ENCODE measurements at regions of chr4 and their contacts with region 1.

Region 1: GRCh38 chr4:39181905-39182638 is at the start of gene WDR19:
- DNase-seq: peak; percentile 99
- ATAC-seq: peak; percentile 99
- H3K4me3 ChIP-seq: peak within 1 kb of the TSS; percentile 91 to 96 (median 93)
- H3K27ac ChIP-seq: peak within 1 kb of the TSS; percentile 47
- H3K4me1 ChIP-seq: peaks cover 20% of the 10 kb centered on the region
- H3K27me3 ChIP-seq: no peaks in the 10 kb centered on the region
- CTCF ChIP-seq: peak; percentile 69
- EP300 ChIP-seq: no peak
- POLR2A ChIP-seq: peak in 1 of 2 experiments; percentile 33; a peak in 2 of 4 replicates
- RAD21 ChIP-seq: 0 out of 2 replicates have a peak, but pooled peaks have one; percentile 11
- total RNA-seq, gene WDR19: 20.3 and 22.9 TPM in 2 replicates

Region 2: GRCh38 chr4:39365830-39366771 is 184.0 kb after region 1 on chr4 and contains the start of gene RFC1:
- CTCF ChIA-PET with region 1: no interaction called
- POLR2A ChIA-PET with region 1: no interaction called
- in situ Hi-C with region 1: no loop called
- intact Hi-C with region 1: loop called (anchors 10 kb)
- DNase-seq: peak; percentile 87
- ATAC-seq: peak; percentile 81
- H3K4me3 ChIP-seq: peak within 1 kb of the TSS; percentile 76 to 85 (median 84)
- H3K27ac ChIP-seq: peak within 1 kb of the TSS; percentile 88
- H3K4me1 ChIP-seq: peaks cover 47% of the 10 kb centered on the region
- H3K27me3 ChIP-seq: no peaks in the 10 kb centered on the region; a peak in 1 of 5 replicates
- CTCF ChIP-seq: no peak; the same call in 1 of the 2 replicates
- EP300 ChIP-seq: no peak
- POLR2A ChIP-seq: peak; percentile 65 to 77
- RAD21 ChIP-seq: 0 out of 2 replicates have a peak, but pooled peaks have one; percentile 14
- total RNA-seq, gene RFC1: 78.8 and 118 TPM in 2 replicates

Region 3: DNA sequence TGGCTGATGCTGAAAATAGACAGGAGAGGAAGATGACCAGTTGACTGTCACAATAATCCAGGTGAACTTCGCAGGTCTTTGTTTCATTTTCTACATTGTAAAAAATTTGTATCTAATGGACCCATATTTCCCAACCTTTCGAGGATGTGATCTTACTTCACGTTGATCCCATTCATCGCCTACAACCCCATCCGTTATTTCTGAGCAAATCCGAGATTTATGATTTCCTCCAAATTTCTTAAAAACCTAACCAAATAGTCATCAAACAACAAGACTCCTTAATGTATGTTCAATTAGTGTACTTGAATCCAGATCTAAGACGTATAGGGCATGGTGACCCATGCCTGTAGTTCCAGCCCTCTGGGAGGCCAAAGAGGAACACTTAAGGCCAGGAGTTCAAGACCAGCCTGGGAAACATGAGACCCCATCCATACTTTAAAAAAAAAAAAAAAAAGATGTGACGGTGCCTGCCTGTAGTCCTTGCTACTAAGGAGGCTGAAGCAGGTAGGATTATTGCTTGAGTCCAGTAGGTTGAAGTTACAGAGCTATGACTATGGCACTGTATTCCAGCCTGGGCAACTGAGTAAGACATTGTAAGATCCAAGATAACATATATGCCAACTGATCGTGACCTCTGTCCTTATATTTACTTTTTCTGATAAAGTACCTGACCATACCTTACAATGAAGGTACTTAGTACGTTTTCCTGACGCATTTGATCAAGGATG is 271.0 kb after region 1 on chr4:
- CTCF ChIA-PET with region 1: no interaction called
- POLR2A ChIA-PET with region 1: no interaction called
- in situ Hi-C with region 1: no loop called
- intact Hi-C with region 1: loop called (anchors 5 kb)
- DNase-seq: no peak
- ATAC-seq: no peak
- H3K4me3 ChIP-seq: no peak overlapping the region
- H3K27ac ChIP-seq: no peak overlapping the region
- H3K4me1 ChIP-seq: peaks cover 82% of the 10 kb centered on the region
- H3K27me3 ChIP-seq: no peaks in the 10 kb centered on the region; a peak in 1 of 5 replicates
- CTCF ChIP-seq: no peak
- EP300 ChIP-seq: no peak
- POLR2A ChIP-seq: no peak; a peak in 1 of 4 replicates
- RAD21 ChIP-seq: no peak